ENCODE measurements at regions of chr12 and their contacts with region 1.

Region 1: GRCh38 chr12:6355491-6356371 is 13.9 kb upstream of the TNFRSF1A start:
- DNase-seq: peak; percentile 81
- H3K4me3 ChIP-seq: no peak overlapping the region
- H3K27ac ChIP-seq: peak overlapping the region; percentile 41
- H3K4me1 ChIP-seq: peaks cover 65% of the 10 kb centered on the region
- CTCF ChIP-seq: peak; percentile 53

Region 2: GRCh38 chr12:5442251-5443006 is 913.3 kb before region 1 on chr12:
- CTCF ChIA-PET with region 1: no interaction called
- POLR2A ChIA-PET with region 1: no interaction called
- intact Hi-C with region 1: no loop called
- DNase-seq: peak; percentile 42
- H3K4me3 ChIP-seq: no peak overlapping the region
- H3K27ac ChIP-seq: no peak overlapping the region
- H3K4me1 ChIP-seq: peaks cover 80% of the 10 kb centered on the region
- CTCF ChIP-seq: peak; percentile 73

Region 3: DNA sequence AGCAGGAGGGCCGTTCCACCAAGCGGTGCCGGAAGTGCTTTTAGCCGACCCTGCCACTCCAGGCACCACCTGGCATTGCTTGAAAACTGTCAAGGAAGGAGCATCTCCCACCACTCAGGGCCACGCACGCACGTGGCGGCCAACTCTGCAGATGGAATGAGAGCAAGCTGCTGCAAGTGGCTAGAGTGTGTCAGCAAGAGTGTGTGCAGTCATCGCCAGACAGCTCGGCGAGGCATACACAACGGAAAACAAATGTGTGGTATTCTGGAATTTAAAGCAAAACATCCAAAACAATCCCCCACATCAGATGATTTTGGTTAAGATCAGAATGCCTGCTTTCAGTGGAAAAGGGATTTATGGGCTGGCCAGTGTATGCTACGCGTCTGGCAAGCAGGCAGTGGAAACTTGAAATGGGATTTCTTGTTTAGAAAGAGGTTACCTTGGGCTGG is 144.3 kb before region 1 on chr12:
- CTCF ChIA-PET with region 1: interaction called, 3 read pairs
- POLR2A ChIA-PET with region 1: no interaction called
- intact Hi-C with region 1: loop called (anchors 2 kb)
- DNase-seq: no peak
- H3K4me3 ChIP-seq: no peak overlapping the region
- H3K27ac ChIP-seq: no peak overlapping the region
- H3K4me1 ChIP-seq: peaks cover 23% of the 10 kb centered on the region
- CTCF ChIP-seq: no peak

Region 4: DNA sequence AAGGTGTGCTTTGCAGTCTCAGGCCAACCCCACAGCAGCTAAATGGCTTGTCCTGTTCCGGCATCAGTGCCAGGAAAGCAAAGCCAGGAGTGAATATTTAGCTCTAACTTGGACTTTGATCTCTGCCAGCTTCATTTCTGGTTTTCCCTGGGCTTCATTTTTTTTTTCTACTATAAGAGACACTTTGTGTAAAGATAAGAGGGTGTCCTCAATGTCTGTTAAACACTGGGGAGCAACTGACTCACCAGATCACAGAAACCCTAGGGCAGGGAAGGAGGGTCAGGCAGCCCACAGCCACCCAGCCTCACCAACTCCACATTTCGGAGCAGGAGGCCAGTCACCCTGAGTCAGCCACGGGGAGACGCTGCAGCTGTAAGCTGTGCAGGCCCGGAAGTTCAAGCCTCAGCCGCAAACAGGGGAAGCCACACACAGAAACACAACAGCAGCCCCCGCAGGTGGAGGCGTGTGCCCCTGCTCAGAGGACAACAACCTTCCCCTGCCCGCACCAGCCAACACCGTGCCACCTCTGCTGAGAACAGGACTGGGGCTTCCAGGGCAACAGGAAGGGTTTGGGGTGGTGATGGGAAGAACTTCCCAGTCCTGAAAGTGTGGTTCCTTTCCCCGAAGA is 20.2 kb before region 1 on chr12:
- CTCF ChIA-PET with region 1: interaction called, 5 read pairs
- POLR2A ChIA-PET with region 1: interaction called, 55 read pairs
- intact Hi-C with region 1: no loop called
- DNase-seq: peak; percentile 90
- H3K4me3 ChIP-seq: peak overlapping the region; percentile 53
- H3K27ac ChIP-seq: peak overlapping the region; percentile 80
- H3K4me1 ChIP-seq: peaks cover 72% of the 10 kb centered on the region
- CTCF ChIP-seq: peak; percentile 89

Region 5: GRCh38 chr12:6345319-6346091 is 10.2 kb before region 1 on chr12:
- CTCF ChIA-PET with region 1: interaction called, 18 read pairs
- POLR2A ChIA-PET with region 1: interaction called, 19 read pairs
- intact Hi-C with region 1: no loop called
- DNase-seq: peak; percentile 53
- H3K4me3 ChIP-seq: no peak overlapping the region
- H3K27ac ChIP-seq: no peak overlapping the region
- H3K4me1 ChIP-seq: peaks cover 48% of the 10 kb centered on the region
- CTCF ChIP-seq: no peak

Region 6: GRCh38 chr12:6735448-6736191 is 379.9 kb after region 1 on chr12:
- CTCF ChIA-PET with region 1: no interaction called
- POLR2A ChIA-PET with region 1: no interaction called
- intact Hi-C with region 1: no loop called
- DNase-seq: peak; percentile 39
- H3K4me3 ChIP-seq: no peak overlapping the region
- H3K27ac ChIP-seq: no peak overlapping the region
- H3K4me1 ChIP-seq: peaks cover under 1% of the 10 kb centered on the region
- CTCF ChIP-seq: peak; percentile 76